Activated CD4-positive, alpha-beta memory T cell treated with anti-CD3 and anti-CD28 coated beads for 36 hours (primary cell): ENCODE measurements at regions of chr3 and their contacts with region 1.

Region 1: DNA sequence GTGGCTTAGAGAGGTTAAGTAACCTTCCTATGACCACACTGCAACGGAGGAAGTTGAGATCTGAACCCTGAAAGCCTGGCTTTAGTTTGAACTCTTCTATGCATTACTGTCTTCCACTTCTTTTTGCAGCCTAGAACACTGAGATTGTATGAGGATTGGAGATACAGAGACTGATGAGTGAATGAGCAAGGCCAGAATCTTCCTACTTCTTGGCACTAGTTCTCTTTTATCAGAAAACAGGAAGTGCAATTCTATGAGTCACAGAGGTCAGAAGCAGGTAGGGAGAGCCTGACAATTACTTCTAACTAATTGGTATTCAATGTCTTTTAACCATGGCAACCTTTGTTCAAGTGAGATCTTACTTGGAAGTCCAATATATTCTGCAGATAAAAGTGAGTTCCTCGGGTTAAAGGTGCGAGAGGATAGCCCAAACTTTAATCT is 219.0 kb downstream of the SHQ1 start:
- DNase-seq: no peak
- H3K4me3 Mint-ChIP-seq: peak overlapping the region; percentile 4
- H3K27ac Mint-ChIP-seq: peak overlapping the region; percentile 74
- H3K4me1 Mint-ChIP-seq: peaks cover 60% of the 10 kb centered on the region
- H3K27me3 Mint-ChIP-seq: no peaks in the 10 kb centered on the region

Region 2: GRCh38 chr3:71955240-71956068 is 673.8 kb before region 1 on chr3:
- CTCF ChIA-PET with region 1: no interaction called
- POLR2A ChIA-PET with region 1: no interaction called
- intact Hi-C with region 1: loop called (anchors 10 kb)
- DNase-seq: peak; percentile 75
- H3K4me3 Mint-ChIP-seq: no peak overlapping the region
- H3K27ac Mint-ChIP-seq: peak overlapping the region; percentile 61
- H3K4me1 Mint-ChIP-seq: peaks cover 30% of the 10 kb centered on the region
- H3K27me3 Mint-ChIP-seq: no peaks in the 10 kb centered on the region

Region 3: DNA sequence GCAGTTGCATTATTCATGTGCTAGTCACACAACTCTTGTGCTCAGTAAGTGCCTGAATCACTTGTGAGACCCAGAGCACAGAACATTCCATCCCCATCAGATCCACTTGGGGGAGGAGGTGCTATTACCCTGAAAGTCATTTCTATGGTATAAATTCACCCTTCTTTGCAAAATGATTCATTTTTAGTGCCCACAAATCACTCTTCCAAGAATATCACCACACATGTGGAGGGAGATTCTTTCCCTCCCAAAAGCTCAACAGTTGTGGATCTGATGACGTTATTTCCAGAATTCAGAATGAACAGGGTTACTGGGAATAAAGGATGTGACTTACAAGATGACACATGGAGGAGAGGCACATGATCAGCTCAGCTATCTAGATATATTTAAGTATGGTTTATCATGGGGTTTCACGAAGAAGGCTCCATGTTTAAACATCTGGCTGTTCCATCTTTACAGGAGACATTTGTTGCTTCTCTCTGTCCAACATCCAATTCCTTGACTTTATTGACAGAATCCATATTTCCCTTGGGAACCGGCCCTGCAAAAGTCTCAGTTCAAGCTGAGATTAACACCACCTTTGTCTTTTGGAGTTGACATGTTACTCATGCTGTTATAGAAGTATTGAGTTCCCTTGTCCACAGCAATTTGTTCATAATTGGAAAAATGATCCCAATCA is 630.1 kb before region 1 on chr3:
- CTCF ChIA-PET with region 1: no interaction called
- POLR2A ChIA-PET with region 1: no interaction called
- intact Hi-C with region 1: loop called (anchors 5 kb)
- DNase-seq: peak; percentile 56
- H3K4me3 Mint-ChIP-seq: no peak overlapping the region
- H3K27ac Mint-ChIP-seq: peak overlapping the region; percentile 85
- H3K4me1 Mint-ChIP-seq: peaks cover 45% of the 10 kb centered on the region
- H3K27me3 Mint-ChIP-seq: peaks cover 12% of the 10 kb centered on the region

Region 4: GRCh38 chr3:72375237-72376076 is 253.8 kb before region 1 on chr3:
- CTCF ChIA-PET with region 1: no interaction called
- POLR2A ChIA-PET with region 1: interaction called, 3 read pairs
- intact Hi-C with region 1: loop called (anchors 5 kb)
- DNase-seq: peak; percentile 70
- H3K4me3 Mint-ChIP-seq: peak overlapping the region; percentile 6
- H3K27ac Mint-ChIP-seq: peak overlapping the region; percentile 86
- H3K4me1 Mint-ChIP-seq: peaks cover 65% of the 10 kb centered on the region
- H3K27me3 Mint-ChIP-seq: no peaks in the 10 kb centered on the region

Region 5: GRCh38 chr3:72473156-72473555 is 156.1 kb before region 1 on chr3:
- CTCF ChIA-PET with region 1: no interaction called
- POLR2A ChIA-PET with region 1: interaction called, 4 read pairs
- intact Hi-C with region 1: loop called (anchors 1 kb)
- DNase-seq: no peak
- H3K4me3 Mint-ChIP-seq: no peak overlapping the region
- H3K27ac Mint-ChIP-seq: peak overlapping the region; percentile 61
- H3K4me1 Mint-ChIP-seq: peaks cover 40% of the 10 kb centered on the region
- H3K27me3 Mint-ChIP-seq: peaks cover 2% of the 10 kb centered on the region

Region 6: DNA sequence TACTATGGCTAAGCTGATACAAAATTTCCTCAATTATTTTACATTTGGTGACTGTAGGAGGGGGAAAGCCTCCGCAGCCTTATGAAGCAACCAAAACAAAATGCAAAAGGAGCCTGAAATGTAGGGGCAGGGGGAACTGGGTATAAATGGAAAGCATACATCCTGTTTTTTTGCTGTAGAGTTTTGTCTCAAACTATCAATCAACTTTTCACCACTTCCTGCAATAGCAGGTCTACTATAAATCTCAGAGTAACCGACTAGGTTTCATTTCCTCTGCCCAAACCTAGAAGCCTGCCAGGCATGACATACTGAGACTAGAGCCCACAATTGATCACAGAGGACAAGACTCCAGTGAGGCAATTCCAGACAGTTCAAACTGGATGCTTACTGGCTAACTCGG is 127.7 kb after region 1 on chr3:
- CTCF ChIA-PET with region 1: no interaction called
- POLR2A ChIA-PET with region 1: no interaction called
- intact Hi-C with region 1: loop called (anchors 2 kb)
- DNase-seq: peak; percentile 62
- H3K4me3 Mint-ChIP-seq: peak overlapping the region; percentile 33
- H3K27ac Mint-ChIP-seq: peak overlapping the region; percentile 77
- H3K4me1 Mint-ChIP-seq: peaks cover 36% of the 10 kb centered on the region
- H3K27me3 Mint-ChIP-seq: no peaks in the 10 kb centered on the region